ENCODE measurements at regions of chr6 and their contacts with region 1.

Region 1: DNA sequence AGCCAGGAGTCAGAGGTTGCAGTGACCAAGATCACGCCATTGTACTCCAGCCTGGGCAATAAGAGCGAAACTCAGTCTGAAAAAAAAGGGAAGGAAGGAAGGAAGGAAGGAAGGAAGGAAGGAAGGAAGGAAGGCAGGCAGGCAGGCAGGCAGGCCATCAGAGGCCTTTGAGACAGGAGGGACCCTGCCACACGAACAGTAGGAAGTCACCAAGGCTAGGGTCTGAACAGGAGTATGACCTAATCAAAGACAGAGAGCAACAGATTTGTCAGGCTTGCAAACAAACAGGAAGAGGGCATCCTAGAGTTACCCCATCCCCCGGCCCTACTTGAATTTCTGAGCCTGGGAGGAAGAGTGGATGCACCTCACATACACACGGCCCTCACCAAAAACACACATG is 67.1 kb downstream of the FGD2 start:
- DNase-seq: no peak
- H3K4me3 ChIP-seq: no peak overlapping the region
- H3K27me3 ChIP-seq: peaks cover 1% of the 10 kb centered on the region; the same call in 1 of the 2 replicates
- CTCF ChIP-seq: no peak

Region 2: DNA sequence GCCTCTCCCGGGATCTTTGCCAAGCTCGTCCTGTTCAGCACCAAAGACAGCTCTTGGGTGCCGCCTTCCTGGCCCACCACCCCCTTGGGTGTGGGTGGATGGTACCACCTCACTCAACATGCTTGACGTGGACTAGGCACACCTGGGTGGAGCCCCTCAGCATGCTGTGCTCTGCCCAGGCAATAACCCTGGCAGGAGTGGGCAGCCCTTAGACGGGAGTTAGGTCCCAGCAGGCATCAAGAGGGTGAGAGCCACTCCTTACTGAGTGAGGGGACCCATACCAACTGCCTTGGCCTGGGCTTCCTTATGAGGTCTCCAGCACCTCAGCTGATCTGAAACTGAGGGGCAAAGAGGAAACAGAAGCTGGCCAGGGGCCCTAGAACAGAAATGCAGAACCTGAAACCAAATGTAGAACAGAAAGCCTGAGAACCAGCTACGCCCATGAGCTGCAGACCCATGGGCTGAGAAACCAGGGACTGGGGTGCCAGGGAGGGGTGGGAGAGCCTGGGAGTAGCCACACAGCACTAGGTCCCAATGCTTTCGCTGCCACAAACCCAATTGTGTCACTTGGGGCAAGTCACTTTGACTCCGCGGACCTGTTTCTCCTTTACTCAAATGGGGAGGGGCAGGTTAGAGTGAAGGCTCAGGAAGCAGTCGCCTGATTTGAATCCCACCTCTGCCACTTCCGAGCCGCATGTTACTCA is 65.0 kb before region 1 on chr6:
- CTCF ChIA-PET with region 1: no interaction called
- POLR2A ChIA-PET with region 1: no interaction called
- DNase-seq: no peak
- H3K4me3 ChIP-seq: no peak overlapping the region
- H3K27me3 ChIP-seq: no peaks in the 10 kb centered on the region
- CTCF ChIP-seq: no peak

Region 3: GRCh38 chr6:37059344-37060206 is 13.0 kb before region 1 on chr6:
- CTCF ChIA-PET with region 1: interaction called, 30 read pairs
- POLR2A ChIA-PET with region 1: no interaction called
- DNase-seq: peak; percentile 90
- H3K4me3 ChIP-seq: no peak overlapping the region
- H3K27me3 ChIP-seq: no peaks in the 10 kb centered on the region
- CTCF ChIP-seq: peak; percentile 84

Region 4: GRCh38 chr6:37092923-37093920 is 20.7 kb after region 1 on chr6:
- CTCF ChIA-PET with region 1: no interaction called
- POLR2A ChIA-PET with region 1: no interaction called
- DNase-seq: no peak
- H3K4me3 ChIP-seq: no peak overlapping the region
- H3K27me3 ChIP-seq: no peaks in the 10 kb centered on the region; the same call in 1 of the 2 replicates
- CTCF ChIP-seq: no peak

Measured in BJ (cell line).